ENCODE measurements at regions of chrX and their contacts with region 1.

Region 1: GRCh38 chrX:97326456-97326855 is 442.7 kb downstream of the RPA4 start:
- DNase-seq: no peak
- ATAC-seq: no peak
- H3K4me3 Mint-ChIP-seq: no peak overlapping the region
- H3K27ac Mint-ChIP-seq: no peak overlapping the region
- H3K4me1 Mint-ChIP-seq: peaks cover 11% of the 10 kb centered on the region
- H3K27me3 Mint-ChIP-seq: no peaks in the 10 kb centered on the region
- CTCF ChIP-seq: no peak

Region 2: GRCh38 chrX:97074400-97074799 is 252.1 kb before region 1 on chrX:
- CTCF ChIA-PET with region 1: no interaction called
- POLR2A ChIA-PET with region 1: no interaction called
- intact Hi-C with region 1: no loop called
- DNase-seq: no peak
- ATAC-seq: no peak
- H3K4me3 Mint-ChIP-seq: no peak overlapping the region
- H3K27ac Mint-ChIP-seq: no peak overlapping the region
- H3K4me1 Mint-ChIP-seq: no peaks in the 10 kb centered on the region
- H3K27me3 Mint-ChIP-seq: no peaks in the 10 kb centered on the region
- CTCF ChIP-seq: no peak

Region 3: GRCh38 chrX:97267381-97268181 is 58.9 kb before region 1 on chrX:
- CTCF ChIA-PET with region 1: no interaction called
- POLR2A ChIA-PET with region 1: interaction called, 19 read pairs
- intact Hi-C with region 1: no loop called
- DNase-seq: no peak
- ATAC-seq: no peak
- H3K4me3 Mint-ChIP-seq: no peak overlapping the region
- H3K27ac Mint-ChIP-seq: no peak overlapping the region
- H3K4me1 Mint-ChIP-seq: no peaks in the 10 kb centered on the region
- H3K27me3 Mint-ChIP-seq: no peaks in the 10 kb centered on the region
- CTCF ChIP-seq: no peak

Region 4: GRCh38 chrX:97290199-97290598 is 36.3 kb before region 1 on chrX:
- CTCF ChIA-PET with region 1: no interaction called
- POLR2A ChIA-PET with region 1: no interaction called
- intact Hi-C with region 1: no loop called
- DNase-seq: no peak
- ATAC-seq: no peak
- H3K4me3 Mint-ChIP-seq: no peak overlapping the region
- H3K27ac Mint-ChIP-seq: no peak overlapping the region
- H3K4me1 Mint-ChIP-seq: no peaks in the 10 kb centered on the region
- H3K27me3 Mint-ChIP-seq: no peaks in the 10 kb centered on the region
- CTCF ChIP-seq: no peak